WTC11 (cell line): ENCODE measurements at regions of chr6 and their contacts with region 1.

Region 1: GRCh38 chr6:41683510-41684310 is 45.4 kb downstream of the MDFI start:
- DNase-seq: peak; percentile 82
- ATAC-seq: peak; percentile 50
- H3K4me3 Mint-ChIP-seq: peak overlapping the region; percentile 54
- H3K27ac Mint-ChIP-seq: no peak overlapping the region
- H3K4me1 Mint-ChIP-seq: peaks cover 47% of the 10 kb centered on the region
- H3K27me3 Mint-ChIP-seq: peaks cover 9% of the 10 kb centered on the region
- CTCF ChIP-seq: peak; percentile 86

Region 2: DNA sequence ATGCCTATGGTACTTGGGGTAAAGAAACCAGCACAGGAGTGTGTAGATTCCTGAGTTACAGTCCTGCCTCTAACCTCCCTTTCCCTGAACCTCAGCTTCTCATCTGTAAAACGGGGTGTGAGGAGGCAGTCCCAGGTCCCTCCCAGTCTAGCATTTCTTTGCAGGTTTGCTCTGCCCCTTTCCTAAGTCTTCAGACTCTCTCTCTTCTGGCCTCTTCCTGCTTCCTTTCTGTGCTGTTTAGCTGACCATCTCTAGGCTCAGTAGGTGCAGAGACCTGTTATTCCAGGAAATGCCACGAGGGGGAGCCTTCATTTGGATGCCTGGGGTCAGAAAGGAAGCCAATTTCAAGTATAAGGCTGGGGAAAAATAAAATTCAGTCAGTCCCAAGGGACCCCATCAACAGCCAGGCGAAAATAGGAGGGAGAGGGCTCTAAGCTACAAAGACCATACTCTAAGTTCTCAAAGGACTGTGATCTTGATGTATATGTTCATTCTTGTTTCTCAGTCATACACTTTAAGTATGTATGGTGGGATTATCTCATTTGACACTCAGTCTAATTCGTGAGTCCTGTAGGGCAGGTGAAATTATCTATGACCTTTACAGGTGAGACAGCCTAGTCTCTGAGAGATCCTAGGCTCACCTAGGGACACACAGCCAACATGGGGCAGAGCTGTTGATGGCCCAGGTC is 259.2 kb before region 1 on chr6:
- CTCF ChIA-PET with region 1: interaction called, 17 read pairs
- POLR2A ChIA-PET with region 1: no interaction called
- DNase-seq: peak; percentile 91
- ATAC-seq: peak; percentile 33
- H3K4me3 Mint-ChIP-seq: no peak overlapping the region
- H3K27ac Mint-ChIP-seq: no peak overlapping the region
- H3K4me1 Mint-ChIP-seq: peaks cover 9% of the 10 kb centered on the region
- H3K27me3 Mint-ChIP-seq: peaks cover 50% of the 10 kb centered on the region
- CTCF ChIP-seq: peak; percentile 80

Region 3: GRCh38 chr6:41602864-41603608 is 80.7 kb before region 1 on chr6:
- CTCF ChIA-PET with region 1: interaction called, 144 read pairs
- POLR2A ChIA-PET with region 1: interaction called, 8 read pairs
- DNase-seq: peak; percentile 88
- ATAC-seq: peak; percentile 66
- H3K4me3 Mint-ChIP-seq: peak overlapping the region; percentile 61
- H3K27ac Mint-ChIP-seq: no peak overlapping the region
- H3K4me1 Mint-ChIP-seq: peaks cover 36% of the 10 kb centered on the region
- H3K27me3 Mint-ChIP-seq: no peaks in the 10 kb centered on the region
- CTCF ChIP-seq: peak; percentile 79

Region 4: DNA sequence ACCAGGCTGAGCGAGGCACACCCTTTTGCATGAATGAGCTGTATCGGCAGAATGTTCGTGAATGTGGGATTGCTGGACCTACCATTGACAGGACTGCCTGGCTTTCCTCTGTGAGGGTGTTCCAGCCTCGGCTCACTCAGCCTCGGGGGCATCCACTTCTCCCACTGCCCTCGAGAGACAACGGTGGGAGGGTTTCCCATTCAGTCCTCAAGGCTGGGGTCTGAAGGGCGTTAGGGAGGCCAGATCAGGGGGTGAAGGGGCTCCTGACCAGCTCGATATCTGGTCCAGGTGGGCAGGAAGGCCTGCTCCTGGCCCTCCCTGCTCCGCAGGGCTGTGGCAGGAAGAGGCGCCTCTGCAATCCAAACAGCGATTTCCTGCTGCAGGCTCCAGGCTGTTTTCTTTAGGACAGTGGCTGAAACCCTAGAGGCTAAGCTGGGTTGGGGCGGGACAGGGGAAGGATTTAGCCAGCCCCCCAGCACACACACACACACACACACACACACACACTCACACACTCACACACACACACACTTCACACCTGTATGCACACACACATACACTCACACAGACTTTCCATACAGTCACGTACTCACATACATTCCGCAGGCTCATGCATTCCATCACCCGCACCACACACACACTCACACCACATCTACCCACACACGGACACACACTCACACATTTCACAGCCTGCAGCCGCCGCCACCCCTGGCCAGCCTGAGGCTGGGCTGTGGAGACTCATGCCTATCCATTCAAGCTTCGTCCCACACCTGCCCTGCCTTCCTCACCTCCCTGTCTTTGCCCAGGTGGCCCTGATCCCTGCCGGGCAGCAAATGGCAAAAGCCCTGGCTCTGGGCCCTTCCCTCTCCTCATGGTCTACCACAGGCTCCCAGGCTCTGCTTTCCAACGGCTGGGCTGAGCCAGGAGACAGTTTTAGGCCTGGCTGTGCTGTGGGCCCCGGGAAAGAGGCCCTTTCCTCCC is 27.7 kb before region 1 on chr6:
- CTCF ChIA-PET with region 1: interaction called, 11 read pairs
- POLR2A ChIA-PET with region 1: no interaction called
- DNase-seq: no peak
- ATAC-seq: peak; percentile 51
- H3K4me3 Mint-ChIP-seq: no peak overlapping the region
- H3K27ac Mint-ChIP-seq: peak overlapping the region; percentile 75
- H3K4me1 Mint-ChIP-seq: peaks cover 28% of the 10 kb centered on the region
- H3K27me3 Mint-ChIP-seq: peaks cover 3% of the 10 kb centered on the region
- CTCF ChIP-seq: no peak

Region 5: GRCh38 chr6:41700463-41701347 is 17.0 kb after region 1 on chr6:
- CTCF ChIA-PET with region 1: interaction called, 21 read pairs
- POLR2A ChIA-PET with region 1: no interaction called
- DNase-seq: peak; percentile 50
- ATAC-seq: peak; percentile 69
- H3K4me3 Mint-ChIP-seq: no peak overlapping the region
- H3K27ac Mint-ChIP-seq: no peak overlapping the region
- H3K4me1 Mint-ChIP-seq: peaks cover 11% of the 10 kb centered on the region
- H3K27me3 Mint-ChIP-seq: no peaks in the 10 kb centered on the region
- CTCF ChIP-seq: no peak

Region 6: DNA sequence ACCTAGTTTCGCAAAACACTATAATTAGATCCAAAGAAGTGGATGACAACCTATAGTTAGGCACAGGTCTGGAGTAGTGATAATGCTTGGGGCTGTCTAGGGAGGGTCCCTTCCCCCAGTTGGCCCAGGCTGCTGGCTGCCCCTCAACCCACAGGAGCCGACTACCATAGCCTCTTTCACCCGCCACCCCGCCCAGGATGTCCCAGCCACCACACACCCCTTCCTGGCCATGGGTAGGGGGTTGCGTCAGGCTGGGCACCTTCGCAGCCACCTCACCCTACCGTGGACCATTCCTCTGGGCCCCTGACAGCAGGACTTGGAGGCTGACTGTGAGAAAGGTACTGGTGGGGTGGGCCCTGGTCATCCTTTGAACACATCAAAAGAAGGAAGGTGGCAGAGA is 43.2 kb after region 1 on chr6:
- CTCF ChIA-PET with region 1: no interaction called
- POLR2A ChIA-PET with region 1: no interaction called
- DNase-seq: no peak
- ATAC-seq: no peak
- H3K4me3 Mint-ChIP-seq: no peak overlapping the region
- H3K27ac Mint-ChIP-seq: no peak overlapping the region
- H3K4me1 Mint-ChIP-seq: peaks cover 46% of the 10 kb centered on the region
- H3K27me3 Mint-ChIP-seq: peaks cover 4% of the 10 kb centered on the region
- CTCF ChIP-seq: no peak

Region 7: GRCh38 chr6:41787219-41787917 is 103.7 kb after region 1 on chr6 and contains the start of gene TOMM6:
- CTCF ChIA-PET with region 1: interaction called, 23 read pairs
- POLR2A ChIA-PET with region 1: no interaction called
- DNase-seq: peak; percentile 96
- ATAC-seq: peak; percentile 74
- H3K4me3 Mint-ChIP-seq: peak within 1 kb of the TSS; percentile 96
- H3K27ac Mint-ChIP-seq: peak within 1 kb of the TSS; percentile 97
- H3K4me1 Mint-ChIP-seq: peaks cover 22% of the 10 kb centered on the region
- H3K27me3 Mint-ChIP-seq: peaks cover 38% of the 10 kb centered on the region
- CTCF ChIP-seq: peak; percentile 96
- total RNA-seq, gene TOMM6: 219 to 233 TPM (median 228 TPM) in 3 replicates